ENCODE measurements at regions of chr22 and their contacts with region 1.

Region 1: GRCh38 chr22:31630331-31631329 is 31.4 kb downstream of the PISD start:
- DNase-seq: peak; percentile 95
- ATAC-seq: peak; percentile 88
- H3K4me3 Mint-ChIP-seq: peak overlapping the region; percentile 83
- H3K27ac Mint-ChIP-seq: peak overlapping the region; percentile 91
- H3K4me1 Mint-ChIP-seq: peaks cover 45% of the 10 kb centered on the region
- H3K27me3 Mint-ChIP-seq: no peaks in the 10 kb centered on the region
- CTCF ChIP-seq: no peak

Region 2: GRCh38 chr22:31345331-31346254 is 285.0 kb before region 1 on chr22:
- CTCF ChIA-PET with region 1: interaction called, 3 read pairs
- POLR2A ChIA-PET with region 1: interaction called, 6 read pairs
- intact Hi-C with region 1: loop called (anchors 5 kb)
- DNase-seq: peak; percentile 89
- ATAC-seq: peak; percentile 67
- H3K4me3 Mint-ChIP-seq: peak overlapping the region; percentile 94
- H3K27ac Mint-ChIP-seq: peak overlapping the region; percentile 94
- H3K4me1 Mint-ChIP-seq: peaks cover 33% of the 10 kb centered on the region
- H3K27me3 Mint-ChIP-seq: no peaks in the 10 kb centered on the region
- CTCF ChIP-seq: peak; percentile 88

Region 3: GRCh38 chr22:31451709-31452571 is 178.7 kb before region 1 on chr22:
- CTCF ChIA-PET with region 1: interaction called, 12 read pairs
- POLR2A ChIA-PET with region 1: interaction called, 6 read pairs
- intact Hi-C with region 1: no loop called
- DNase-seq: no peak
- ATAC-seq: peak; percentile 74
- H3K4me3 Mint-ChIP-seq: no peak overlapping the region
- H3K27ac Mint-ChIP-seq: peak overlapping the region; percentile 53
- H3K4me1 Mint-ChIP-seq: no peaks in the 10 kb centered on the region
- H3K27me3 Mint-ChIP-seq: no peaks in the 10 kb centered on the region
- CTCF ChIP-seq: peak; percentile 46

Region 4: GRCh38 chr22:31561238-31561887 is 69.3 kb before region 1 on chr22:
- CTCF ChIA-PET with region 1: interaction called, 12 read pairs
- POLR2A ChIA-PET with region 1: interaction called, 3 read pairs
- intact Hi-C with region 1: loop called (anchors 10 kb)
- DNase-seq: peak; percentile 78
- ATAC-seq: peak; percentile 95
- H3K4me3 Mint-ChIP-seq: no peak overlapping the region
- H3K27ac Mint-ChIP-seq: peak overlapping the region; percentile 54
- H3K4me1 Mint-ChIP-seq: peaks cover 10% of the 10 kb centered on the region
- H3K27me3 Mint-ChIP-seq: no peaks in the 10 kb centered on the region
- CTCF ChIP-seq: peak; percentile 71

Region 5: GRCh38 chr22:31616315-31617001 is 14.2 kb before region 1 on chr22:
- CTCF ChIA-PET with region 1: interaction called, 3 read pairs
- POLR2A ChIA-PET with region 1: interaction called, 16 read pairs
- intact Hi-C with region 1: no loop called
- DNase-seq: peak; percentile 74
- ATAC-seq: peak; percentile 80
- H3K4me3 Mint-ChIP-seq: no peak overlapping the region
- H3K27ac Mint-ChIP-seq: peak overlapping the region; percentile 85
- H3K4me1 Mint-ChIP-seq: peaks cover 29% of the 10 kb centered on the region
- H3K27me3 Mint-ChIP-seq: no peaks in the 10 kb centered on the region
- CTCF ChIP-seq: no peak

Region 6: GRCh38 chr22:31923136-31923535 is 292.5 kb after region 1 on chr22:
- CTCF ChIA-PET with region 1: no interaction called
- POLR2A ChIA-PET with region 1: no interaction called
- intact Hi-C with region 1: no loop called
- DNase-seq: no peak
- ATAC-seq: no peak
- H3K4me3 Mint-ChIP-seq: no peak overlapping the region
- H3K27ac Mint-ChIP-seq: no peak overlapping the region
- H3K4me1 Mint-ChIP-seq: peaks cover 5% of the 10 kb centered on the region
- H3K27me3 Mint-ChIP-seq: peaks cover 12% of the 10 kb centered on the region
- CTCF ChIP-seq: no peak